ENCODE measurements at regions of chr7 and their contacts with region 1.

Region 1: DNA sequence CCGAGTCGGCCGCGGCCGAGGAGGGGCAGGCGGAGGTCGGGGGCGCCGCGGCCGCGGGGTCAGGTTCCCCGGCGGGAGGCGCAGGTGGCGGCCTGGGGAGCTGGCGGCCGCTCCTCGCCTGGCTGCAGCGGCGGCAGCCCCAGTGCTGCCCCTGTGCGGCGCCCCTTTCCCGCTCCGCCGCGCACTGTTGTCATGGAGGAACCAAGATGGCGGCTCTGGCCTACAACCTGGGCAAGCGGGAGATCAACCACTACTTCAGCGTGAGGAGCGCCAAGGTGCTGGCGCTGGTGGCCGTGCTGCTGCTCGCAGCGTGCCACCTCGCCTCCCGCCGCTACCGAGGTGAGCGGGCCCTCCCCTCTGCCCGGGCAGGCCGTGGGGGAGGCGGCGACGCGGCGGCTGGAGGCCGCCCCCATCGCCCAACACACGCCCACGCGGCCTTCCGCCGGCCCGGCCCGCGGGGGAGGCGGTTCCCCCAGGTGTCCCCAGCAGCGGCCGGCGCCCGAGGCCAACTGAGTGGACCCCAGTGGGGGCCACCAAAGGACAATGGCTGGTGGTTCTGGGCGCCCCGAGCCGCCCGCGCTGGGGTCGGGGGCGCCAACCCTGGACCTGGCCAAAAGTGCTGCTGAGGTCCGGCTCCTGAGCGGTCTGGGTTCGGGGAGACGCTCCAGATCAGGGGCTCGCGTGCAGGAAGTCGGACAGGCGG is 421 bp downstream of the CASD1 start:
- DNase-seq: peak; percentile 79
- ATAC-seq: peak; percentile 93

Region 2: GRCh38 chr7:94452239-94452638 is 57.8 kb before region 1 on chr7:
- intact Hi-C with region 1: loop called (anchors 5 kb)
- DNase-seq: no peak
- ATAC-seq: peak; percentile 92

Region 3: DNA sequence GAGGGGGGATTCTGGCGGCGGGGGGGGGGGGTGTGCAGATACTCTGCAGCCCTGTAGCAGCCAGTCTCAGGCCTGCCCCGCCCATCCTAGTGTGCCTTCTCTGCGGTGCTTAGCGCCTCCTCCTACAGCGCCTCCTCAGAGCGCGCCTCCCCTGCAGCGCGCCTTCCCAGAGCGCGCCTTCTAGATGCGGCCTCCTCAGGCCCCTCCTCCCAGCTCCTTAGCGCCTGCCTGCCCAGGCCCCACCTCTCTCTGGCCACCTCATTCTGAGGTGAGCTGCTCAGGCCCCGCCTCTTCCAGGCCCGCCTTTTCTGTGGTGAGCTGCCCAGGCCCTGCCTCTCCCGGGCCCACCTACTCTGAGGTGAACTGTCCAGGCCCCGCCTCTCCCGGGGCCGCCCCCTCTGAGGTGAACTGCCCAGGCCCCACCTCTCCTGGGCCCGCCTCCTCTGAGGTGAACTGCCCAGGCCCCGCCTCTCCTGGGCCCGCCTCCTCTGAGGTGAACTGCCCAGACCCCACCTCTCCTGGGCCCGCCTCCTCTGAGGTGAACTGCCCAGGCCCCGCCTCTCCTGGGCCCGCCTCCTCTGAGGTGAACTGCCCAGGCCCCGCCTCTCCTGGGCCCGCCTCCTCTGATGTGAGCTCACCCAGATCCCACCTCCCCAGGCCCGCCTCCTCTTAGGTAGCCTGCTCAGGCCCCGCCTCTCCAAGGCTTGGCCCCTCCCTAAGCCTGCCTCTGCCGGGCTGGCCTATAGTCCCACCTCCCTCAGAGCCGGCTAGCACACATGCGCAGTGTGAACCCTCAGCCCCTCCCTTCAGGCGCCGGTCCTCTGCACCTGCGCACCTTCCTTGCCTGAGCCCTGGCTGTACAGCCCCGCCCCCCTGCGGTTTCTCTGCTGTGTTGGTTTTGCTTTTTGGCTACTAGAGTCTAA is 148.0 kb after region 1 on chr7:
- intact Hi-C with region 1: loop called (anchors 10 kb)
- DNase-seq: peak; percentile 96
- ATAC-seq: peak; percentile 89